Natural killer cell (primary cell): ENCODE measurements at regions of chr10 and their contacts with region 1.

Region 1: DNA sequence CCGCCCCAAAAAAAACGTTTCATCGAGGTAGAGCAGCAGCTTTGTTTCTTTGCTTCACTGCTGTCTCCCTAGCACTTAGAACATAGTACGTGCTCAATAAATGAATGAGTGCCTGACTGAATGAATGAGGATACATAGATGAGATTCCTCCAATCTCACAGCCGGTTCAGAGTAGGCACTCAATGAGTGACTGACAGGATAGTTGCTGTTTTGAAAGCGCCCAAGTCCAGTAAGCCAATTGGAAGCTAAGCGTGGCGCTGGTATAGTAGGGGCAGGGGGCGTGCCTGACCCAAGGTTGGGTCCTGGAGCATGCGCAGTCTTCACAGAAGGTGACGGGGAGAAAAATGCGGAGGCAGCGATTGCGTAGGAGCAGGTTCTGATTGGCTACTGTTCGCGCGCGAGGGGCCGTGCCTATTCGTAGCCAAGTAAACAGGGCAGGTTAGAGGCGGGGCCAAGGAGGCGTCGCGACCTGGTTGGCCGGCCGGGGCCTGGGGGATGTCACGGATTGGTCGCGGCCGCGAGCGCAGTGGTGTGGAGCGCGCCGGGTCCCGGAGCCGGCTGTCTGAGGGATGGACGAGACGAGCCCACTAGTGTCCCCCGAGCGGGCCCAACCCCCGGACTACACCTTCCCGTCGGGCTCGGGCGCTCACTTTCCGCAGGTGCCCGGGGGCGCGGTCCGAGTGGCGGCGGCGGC is at the start of gene PI4K2A:
- DNase-seq: peak; percentile 98 to 100
- ATAC-seq: peak; percentile 94 to 99 (median 96)
- H3K4me3 ChIP-seq: peak within 1 kb of the TSS; percentile 62
- H3K4me3 Mint-ChIP-seq: peak within 1 kb of the TSS; percentile 99
- H3K27ac ChIP-seq: peak within 1 kb of the TSS; percentile 57
- H3K27ac Mint-ChIP-seq: peak within 1 kb of the TSS; percentile 90
- H3K4me1 ChIP-seq: peaks cover 21% of the 10 kb centered on the region
- H3K4me1 Mint-ChIP-seq: peaks cover 29 to 34% of the 10 kb centered on the region in 2 donors
- H3K27me3 ChIP-seq: no peaks in the 10 kb centered on the region
- H3K27me3 Mint-ChIP-seq: peaks cover 0 to 2% of the 10 kb centered on the region in 2 donors
- CTCF ChIP-seq: no peak
- total RNA-seq, gene PI4K2A: 41.3 to 66.1 (median 60.0) TPM

Region 2: DNA sequence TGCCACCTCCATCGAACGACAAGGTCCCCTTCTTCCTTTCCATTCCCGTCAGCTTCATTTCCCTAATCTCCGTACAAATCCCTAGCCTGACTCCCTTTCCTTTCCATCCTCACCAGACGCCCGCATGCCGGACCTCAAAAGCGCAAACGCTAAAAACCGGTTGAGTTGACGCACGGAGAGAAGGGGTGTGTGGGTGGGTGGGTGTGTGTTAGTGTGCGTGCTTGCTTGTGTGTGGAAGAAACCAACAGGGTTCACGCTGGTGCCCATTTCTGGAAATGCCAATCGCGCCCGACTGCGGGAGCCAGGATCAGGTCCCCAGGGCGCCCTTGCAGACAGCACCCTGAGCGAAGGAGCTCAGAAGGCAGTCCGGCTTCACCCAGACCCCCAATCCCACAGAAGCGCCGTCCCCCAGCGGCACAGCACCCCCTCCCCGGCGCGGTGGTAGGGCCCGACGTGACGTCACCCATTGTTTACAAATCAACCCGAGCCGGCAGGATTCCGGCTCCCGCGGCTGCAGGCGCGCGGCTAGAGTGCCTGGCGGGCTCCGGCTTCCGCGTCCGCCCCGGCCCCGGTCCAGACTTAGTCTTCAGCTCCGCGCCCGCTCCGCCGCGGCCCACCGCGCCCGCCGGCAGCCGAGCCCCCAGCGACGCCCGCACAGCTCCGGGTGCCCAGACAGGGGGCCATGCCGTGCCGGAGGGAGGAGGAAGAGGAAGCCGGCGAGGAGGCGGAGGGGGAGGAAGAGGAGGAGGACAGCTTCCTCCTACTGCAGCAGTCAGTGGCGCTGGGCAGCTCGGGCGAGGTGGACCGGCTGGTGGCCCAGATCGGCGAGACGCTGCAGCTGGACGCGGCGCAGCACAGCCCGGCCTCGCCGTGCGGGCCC is 321.3 kb before region 1 on chr10 and contains the start of gene FRAT1:
- intact Hi-C with region 1: loop called (anchors 2 kb)
- DNase-seq: peak; percentile 93 to 95
- ATAC-seq: peak; percentile 77 to 89 (median 79)
- H3K4me3 ChIP-seq: peak within 1 kb of the TSS; percentile 64
- H3K4me3 Mint-ChIP-seq: peak within 1 kb of the TSS; percentile 98
- H3K27ac ChIP-seq: peak within 1 kb of the TSS; percentile 100
- H3K27ac Mint-ChIP-seq: peak within 1 kb of the TSS; percentile 92 to 99
- H3K4me1 ChIP-seq: peaks cover 33% of the 10 kb centered on the region
- H3K4me1 Mint-ChIP-seq: peaks cover 33% of the 10 kb centered on the region in 2 donors
- H3K27me3 ChIP-seq: no peaks in the 10 kb centered on the region
- H3K27me3 Mint-ChIP-seq: no peaks in the 10 kb centered on the region
- CTCF ChIP-seq: no peak
- total RNA-seq, gene FRAT1: 26.0 to 45.0 (median 32.1) TPM

Region 3: GRCh38 chr10:97412891-97413304 is 227.4 kb before region 1 on chr10:
- intact Hi-C with region 1: loop called (anchors 10 kb)
- DNase-seq: no peak
- ATAC-seq: no peak
- H3K4me3 ChIP-seq: no peak overlapping the region
- H3K4me3 Mint-ChIP-seq: no peak overlapping the region
- H3K27ac ChIP-seq: peak overlapping the region; percentile 90
- H3K27ac Mint-ChIP-seq: peak overlapping the region; percentile 82 to 90
- H3K4me1 ChIP-seq: peaks cover 51% of the 10 kb centered on the region
- H3K4me1 Mint-ChIP-seq: peaks cover 33 to 44% of the 10 kb centered on the region in 2 donors
- H3K27me3 ChIP-seq: no peaks in the 10 kb centered on the region
- H3K27me3 Mint-ChIP-seq: no peaks in the 10 kb centered on the region
- CTCF ChIP-seq: no peak

Region 4: GRCh38 chr10:97479939-97480338 is 160.4 kb before region 1 on chr10:
- intact Hi-C with region 1: no loop called
- DNase-seq: no peak
- ATAC-seq: no peak
- H3K4me3 ChIP-seq: no peak overlapping the region
- H3K4me3 Mint-ChIP-seq: no peak overlapping the region
- H3K27ac ChIP-seq: no peak overlapping the region
- H3K27ac Mint-ChIP-seq: no peak overlapping the region
- H3K4me1 ChIP-seq: no peaks in the 10 kb centered on the region
- H3K4me1 Mint-ChIP-seq: peaks cover 0 to 8% of the 10 kb centered on the region in 2 donors
- H3K27me3 ChIP-seq: no peaks in the 10 kb centered on the region
- H3K27me3 Mint-ChIP-seq: no peaks in the 10 kb centered on the region
- CTCF ChIP-seq: no peak

Region 5: DNA sequence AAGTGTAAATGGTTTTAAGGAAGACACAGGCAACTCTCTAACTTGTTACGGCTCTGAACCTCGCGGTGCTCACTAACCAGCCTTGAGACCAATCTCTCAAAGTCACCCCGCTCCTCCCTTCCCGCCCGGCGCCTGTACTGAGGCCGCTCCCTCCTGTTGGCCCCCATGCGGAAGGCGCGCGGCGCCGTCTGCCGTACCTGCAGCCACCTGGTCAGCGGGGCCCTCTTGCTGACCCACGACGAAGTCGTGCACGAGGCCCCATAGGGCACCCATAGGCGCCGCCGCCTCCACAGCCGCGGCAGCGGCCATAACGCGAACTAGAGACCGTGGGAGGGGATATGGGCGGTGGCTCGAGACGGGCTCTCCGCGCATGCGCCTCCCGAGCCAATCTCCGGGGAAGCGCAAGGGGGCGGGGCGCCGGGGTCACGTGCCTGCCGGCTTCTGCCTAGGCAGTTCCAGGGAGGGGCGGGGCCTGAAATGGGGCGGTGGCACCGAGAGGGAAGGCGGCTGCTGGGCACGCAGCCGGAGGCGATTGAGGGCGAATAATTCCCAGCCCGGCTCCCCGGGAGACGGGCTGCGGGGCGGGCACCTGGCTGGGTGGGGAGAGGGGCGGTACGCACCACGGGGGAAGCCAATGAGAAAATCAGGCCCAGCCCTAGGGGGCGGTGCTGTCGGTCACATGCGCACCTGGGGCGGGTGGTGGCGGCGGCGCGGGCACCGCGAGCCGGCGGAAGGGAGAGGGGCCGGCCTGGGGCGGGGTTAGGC is 142.1 kb before region 1 on chr10 and contains the start of gene MMS19:
- intact Hi-C with region 1: loop called (anchors 5 kb)
- DNase-seq: peak; percentile 99 to 100
- ATAC-seq: peak; percentile 87 to 95 (median 89)
- H3K4me3 ChIP-seq: peak within 1 kb of the TSS; percentile 83
- H3K4me3 Mint-ChIP-seq: peak within 1 kb of the TSS; percentile 98
- H3K27ac ChIP-seq: peak within 1 kb of the TSS; percentile 72
- H3K27ac Mint-ChIP-seq: peak within 1 kb of the TSS; percentile 91 to 98
- H3K4me1 ChIP-seq: peaks cover 7% of the 10 kb centered on the region
- H3K4me1 Mint-ChIP-seq: peaks cover 33 to 38% of the 10 kb centered on the region in 2 donors
- H3K27me3 ChIP-seq: peaks cover 12% of the 10 kb centered on the region
- H3K27me3 Mint-ChIP-seq: peaks cover 23 to 24% of the 10 kb centered on the region in 2 donors
- CTCF ChIP-seq: no peak
- total RNA-seq, gene MMS19: 53.8 to 68.4 (median 61.7) TPM

Region 6: GRCh38 chr10:97566339-97566996 is 73.9 kb before region 1 on chr10:
- intact Hi-C with region 1: no loop called
- DNase-seq: no peak
- ATAC-seq: no peak
- H3K4me3 ChIP-seq: no peak overlapping the region
- H3K4me3 Mint-ChIP-seq: no peak overlapping the region
- H3K27ac ChIP-seq: no peak overlapping the region
- H3K27ac Mint-ChIP-seq: no peak overlapping the region
- H3K4me1 ChIP-seq: no peaks in the 10 kb centered on the region
- H3K4me1 Mint-ChIP-seq: no peaks in the 10 kb centered on the region
- H3K27me3 ChIP-seq: no peaks in the 10 kb centered on the region
- H3K27me3 Mint-ChIP-seq: no peaks in the 10 kb centered on the region
- CTCF ChIP-seq: no peak

Region 7: DNA sequence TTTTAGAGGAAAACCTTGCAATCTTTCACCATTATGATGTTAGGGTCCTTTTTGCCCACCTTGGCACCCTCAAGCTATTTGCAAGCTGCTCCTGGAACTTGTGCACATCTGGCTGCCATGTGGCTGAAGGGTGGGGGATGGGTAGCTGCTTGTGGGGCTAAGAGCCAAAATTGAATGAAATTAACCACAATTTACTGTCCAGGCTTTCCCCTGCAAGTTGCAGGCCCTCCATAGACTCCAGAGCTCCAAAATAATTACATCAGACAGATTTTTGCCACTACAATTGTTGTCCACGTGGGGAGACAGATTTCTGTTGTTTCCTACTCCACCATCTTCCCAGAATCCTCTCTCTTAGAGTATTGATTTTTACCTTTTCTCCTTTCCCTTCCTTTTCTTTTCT is 19.3 kb after region 1 on chr10:
- intact Hi-C with region 1: no loop called
- DNase-seq: no peak
- ATAC-seq: no peak
- H3K4me3 ChIP-seq: no peak overlapping the region
- H3K4me3 Mint-ChIP-seq: no peak overlapping the region
- H3K27ac ChIP-seq: no peak overlapping the region
- H3K27ac Mint-ChIP-seq: peak overlapping the region in 1 of 2 donors; percentile 45
- H3K4me1 ChIP-seq: no peaks in the 10 kb centered on the region
- H3K4me1 Mint-ChIP-seq: no peaks in the 10 kb centered on the region
- H3K27me3 ChIP-seq: no peaks in the 10 kb centered on the region
- H3K27me3 Mint-ChIP-seq: no peaks in the 10 kb centered on the region
- CTCF ChIP-seq: no peak

Region 8: DNA sequence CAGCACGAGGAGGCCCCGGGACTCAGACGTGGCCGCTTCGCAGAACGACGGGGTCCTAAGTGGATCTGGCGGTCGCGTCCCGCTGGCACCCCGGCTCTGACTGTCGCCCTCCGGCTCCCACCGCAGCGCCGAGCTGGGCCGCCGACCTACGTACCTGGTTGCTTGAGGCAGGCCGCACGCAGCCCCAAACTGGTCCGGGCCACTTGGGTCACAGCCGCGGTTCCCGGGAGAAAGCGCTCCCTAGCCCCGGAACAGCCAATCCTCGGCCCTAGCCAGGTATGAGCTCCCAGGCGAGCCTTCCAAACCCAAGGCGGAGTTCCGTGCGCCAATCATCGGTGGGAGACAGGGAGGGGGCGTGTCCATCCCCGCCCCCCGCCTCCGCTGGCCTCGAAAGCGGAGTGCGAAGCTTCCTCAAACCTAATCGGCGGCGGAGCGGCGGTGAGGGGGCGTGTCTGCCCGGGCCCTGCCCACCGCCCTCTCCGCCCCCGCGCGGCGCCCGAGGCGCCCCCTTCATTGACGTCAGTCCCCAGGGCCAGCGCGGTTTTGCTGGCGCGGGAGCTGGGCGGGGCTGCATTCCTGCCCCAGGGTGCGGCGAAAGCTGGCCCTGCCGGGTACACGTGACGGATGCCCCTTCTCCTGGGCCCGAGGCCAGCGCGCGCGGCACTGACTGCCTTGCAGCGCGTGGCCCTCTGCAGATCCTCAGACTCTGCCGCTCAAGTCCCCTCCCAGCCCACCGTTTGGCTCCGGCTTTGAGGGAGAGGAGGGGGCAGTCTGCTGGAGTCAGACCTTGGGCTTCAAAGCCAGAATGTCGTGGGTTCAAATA is 46.9 kb after region 1 on chr10 and contains the start of gene AVPI1:
- intact Hi-C with region 1: loop called (anchors 2 kb)
- DNase-seq: peak; percentile 94 to 98
- ATAC-seq: peak; percentile 92 to 98 (median 93)
- H3K4me3 ChIP-seq: peak within 1 kb of the TSS; percentile 80
- H3K4me3 Mint-ChIP-seq: peak within 1 kb of the TSS; percentile 85
- H3K27ac ChIP-seq: peak within 1 kb of the TSS; percentile 65
- H3K27ac Mint-ChIP-seq: peak within 1 kb of the TSS; percentile 76 to 80
- H3K4me1 ChIP-seq: peaks cover 21% of the 10 kb centered on the region
- H3K4me1 Mint-ChIP-seq: peaks cover 9 to 18% of the 10 kb centered on the region in 2 donors
- H3K27me3 ChIP-seq: no peaks in the 10 kb centered on the region
- H3K27me3 Mint-ChIP-seq: no peaks in the 10 kb centered on the region
- CTCF ChIP-seq: no peak
- total RNA-seq, gene AVPI1: 6.1 to 8.4 (median 6.8) TPM